ENCODE measurements at regions of chr15 and their contacts with region 1.

Region 1: GRCh38 chr15:94026458-94027304 is 204.7 kb upstream of the MCTP2 start:
- DNase-seq: no peak
- H3K4me3 ChIP-seq: no peak overlapping the region
- H3K27ac ChIP-seq: peak overlapping the region; percentile 57 to 81 (median 78)
- H3K4me1 ChIP-seq: peaks cover 0 to 77% (median 72%) of the 10 kb centered on the region in 4 donors
- H3K27me3 ChIP-seq: no peaks in the 10 kb centered on the region
- CTCF ChIP-seq: no peak
- EP300 ChIP-seq: no peak
- POLR2A ChIP-seq: no peak

Region 2: GRCh38 chr15:93942269-93942694 is 84.4 kb before region 1 on chr15:
- intact Hi-C with region 1: no loop called
- DNase-seq: no peak
- H3K4me3 ChIP-seq: no peak overlapping the region
- H3K27ac ChIP-seq: no peak overlapping the region
- H3K4me1 ChIP-seq: peaks cover 0 to 5% (median 0%) of the 10 kb centered on the region in 4 donors
- H3K27me3 ChIP-seq: no peaks in the 10 kb centered on the region
- CTCF ChIP-seq: no peak
- EP300 ChIP-seq: no peak
- POLR2A ChIP-seq: no peak

Region 3: GRCh38 chr15:94080418-94080817 is 53.7 kb after region 1 on chr15:
- intact Hi-C with region 1: loop called (anchors 10 kb)
- DNase-seq: peak; percentile 89
- H3K4me3 ChIP-seq: no peak overlapping the region
- H3K27ac ChIP-seq: peak overlapping the region in 1 of 4 donors; percentile 34
- H3K4me1 ChIP-seq: peaks cover 11 to 81% (median 61%) of the 10 kb centered on the region in 4 donors
- H3K27me3 ChIP-seq: no peaks in the 10 kb centered on the region
- CTCF ChIP-seq: no peak
- EP300 ChIP-seq: no peak
- POLR2A ChIP-seq: no peak